ENCODE measurements at regions of chr1 and their contacts with region 1.

Region 1: DNA sequence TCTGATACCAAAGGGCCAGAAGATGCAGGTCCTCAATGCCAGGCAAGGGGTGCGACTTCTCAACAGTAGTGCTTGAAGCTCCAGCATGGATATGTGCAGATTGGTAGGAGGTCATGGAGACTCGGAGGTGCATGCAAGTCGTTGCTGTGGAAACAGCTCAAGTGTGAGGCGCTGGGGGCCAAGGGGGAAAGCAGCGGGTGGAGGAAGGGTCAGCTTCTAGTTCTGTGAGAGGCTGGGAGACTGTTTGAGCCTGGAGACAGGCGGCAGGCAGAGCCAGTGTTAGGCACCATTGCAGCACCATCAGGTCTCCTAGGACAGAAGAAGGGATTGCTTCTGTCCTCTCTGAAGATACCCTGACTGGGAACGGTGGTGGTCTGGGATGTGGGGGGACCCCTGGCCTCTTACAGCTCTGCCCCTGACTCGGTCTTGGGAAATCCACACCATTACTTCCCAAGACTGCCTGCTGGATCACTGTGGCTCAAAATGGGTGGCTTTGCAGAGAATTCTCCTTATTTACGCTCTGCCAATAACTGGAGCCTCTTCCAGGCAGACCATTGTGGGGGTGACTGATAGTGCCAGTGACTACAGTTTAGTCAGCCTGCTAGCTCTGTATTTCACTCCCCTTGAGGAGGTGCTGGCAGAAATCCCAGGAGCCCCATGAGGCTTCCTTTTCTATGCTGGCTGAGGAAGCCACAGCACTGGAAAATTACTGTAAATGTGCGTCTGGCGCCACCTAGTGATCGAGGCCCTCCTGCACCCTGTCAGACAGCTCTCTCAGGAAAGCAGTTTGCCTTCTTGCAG is 46.3 kb upstream of the VANGL1 start:
- DNase-seq: peak; percentile 74
- H3K4me3 ChIP-seq: peak overlapping the region in 1 of 2 experiments; percentile 12; a peak in 1 of 4 replicates
- H3K27ac ChIP-seq: no peak overlapping the region
- H3K4me1 ChIP-seq: peaks cover 4% of the 10 kb centered on the region in 2 experiments; a peak in 2 of 4 replicates
- H3K27me3 ChIP-seq: no peaks in the 10 kb centered on the region
- CTCF ChIP-seq: peak; percentile 98
- EP300 ChIP-seq: peak in 1 of 2 experiments; percentile 8; a peak in 1 of 4 replicates
- RAD21 ChIP-seq: peak; percentile 98

Region 2: DNA sequence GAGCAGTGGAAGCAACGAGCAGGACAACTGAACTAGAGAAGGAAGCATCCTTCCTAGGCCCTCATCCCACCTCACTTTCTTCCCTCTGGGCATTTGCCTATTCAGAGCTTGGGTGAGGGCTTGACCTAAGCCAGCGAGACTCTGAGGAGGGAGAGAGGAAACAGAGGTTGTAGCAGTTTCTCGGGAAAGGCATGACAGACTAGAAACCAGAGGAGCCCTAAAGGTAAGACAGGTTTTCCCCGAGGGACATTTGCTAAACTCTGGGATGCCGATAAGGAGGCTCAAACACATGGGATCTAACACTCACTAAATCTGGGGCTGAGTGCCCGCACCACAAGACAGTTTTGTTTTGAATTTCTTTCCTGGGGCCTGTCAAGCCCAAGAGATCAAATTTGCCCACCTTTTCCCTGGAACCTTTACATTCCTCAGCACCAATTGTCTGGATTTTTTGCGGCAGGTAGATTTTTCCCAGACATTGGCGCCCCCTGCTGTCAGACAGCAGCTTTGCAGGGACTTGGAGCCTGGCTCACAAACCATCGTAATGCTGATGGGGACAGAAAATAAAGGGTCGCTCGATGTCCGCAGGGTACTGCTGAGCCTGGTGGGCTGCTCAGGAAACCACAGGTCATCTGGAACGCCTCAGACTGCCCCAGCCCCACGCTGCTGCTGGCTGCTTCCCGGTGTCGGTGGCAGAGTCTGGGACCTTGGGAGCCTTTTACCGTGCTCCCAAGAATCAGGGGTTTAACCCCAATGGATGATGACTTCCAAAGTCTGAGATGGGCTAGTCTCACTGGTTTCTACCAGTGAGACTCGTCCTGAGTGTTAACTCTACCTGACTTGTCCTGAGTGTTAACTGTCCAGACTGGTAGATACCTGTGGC is 482.7 kb before region 1 on chr1:
- CTCF ChIA-PET with region 1: interaction called, 27 read pairs
- POLR2A ChIA-PET with region 1: no interaction called
- DNase-seq: peak; percentile 53
- H3K4me3 ChIP-seq: no peak overlapping the region; a peak in 1 of 4 replicates
- H3K27ac ChIP-seq: no peak overlapping the region; a peak in 1 of 4 replicates
- H3K4me1 ChIP-seq: peaks cover 7 to 9% of the 10 kb centered on the region in 2 experiments; a peak in 1 of 4 replicates
- H3K27me3 ChIP-seq: no peaks in the 10 kb centered on the region
- CTCF ChIP-seq: peak; percentile 97
- EP300 ChIP-seq: no peak
- RAD21 ChIP-seq: peak; percentile 89

Region 3: GRCh38 chr1:115133440-115133839 is 462.0 kb before region 1 on chr1:
- CTCF ChIA-PET with region 1: interaction called, 202 read pairs
- POLR2A ChIA-PET with region 1: no interaction called
- DNase-seq: no peak
- H3K4me3 ChIP-seq: no peak overlapping the region
- H3K27ac ChIP-seq: peak overlapping the region in 1 of 2 experiments; percentile 82; a peak in 2 of 4 replicates
- H3K4me1 ChIP-seq: peaks cover 6 to 25% of the 10 kb centered on the region in 2 experiments; a peak in 3 of 4 replicates
- H3K27me3 ChIP-seq: no peaks in the 10 kb centered on the region
- CTCF ChIP-seq: no peak
- EP300 ChIP-seq: no peak
- RAD21 ChIP-seq: no peak

Region 4: DNA sequence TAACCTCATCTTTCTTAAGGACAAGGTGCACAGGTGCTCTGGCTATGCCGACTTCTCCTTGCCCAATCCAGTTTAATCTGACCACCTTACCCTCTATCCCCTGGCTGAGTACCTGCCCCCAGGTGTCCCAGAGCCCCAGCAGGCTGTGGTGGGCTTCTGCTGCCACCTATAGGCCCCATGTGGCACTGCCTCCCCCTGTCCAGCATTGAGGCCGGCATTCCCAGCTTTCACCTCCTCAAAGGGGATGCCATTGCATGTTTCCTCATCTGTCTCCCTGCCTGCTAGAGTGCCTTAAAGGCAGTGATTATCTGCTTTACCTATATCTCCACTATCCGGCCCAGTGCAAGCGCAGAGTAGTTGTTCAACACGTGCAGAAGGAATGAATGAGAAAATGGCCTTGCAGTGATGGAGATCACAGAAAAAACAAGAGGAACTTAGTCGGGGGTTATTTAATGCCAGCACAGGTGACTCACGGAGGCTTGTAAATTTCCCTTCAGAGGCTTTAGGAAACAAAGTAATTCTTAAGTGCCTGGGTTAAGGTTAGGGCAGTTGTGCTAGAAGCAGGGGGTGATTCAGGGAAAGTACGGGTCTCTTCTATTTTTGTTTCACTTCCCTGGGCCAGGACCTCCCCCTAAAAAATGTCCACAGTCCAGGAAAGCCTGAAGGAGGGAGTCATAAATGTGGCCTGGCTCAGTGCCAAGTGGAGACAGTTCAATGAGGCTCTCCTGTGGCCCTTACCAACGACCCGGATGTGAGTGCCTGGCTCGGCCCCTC is 125.6 kb before region 1 on chr1:
- CTCF ChIA-PET with region 1: interaction called, 39 read pairs
- POLR2A ChIA-PET with region 1: no interaction called
- DNase-seq: peak; percentile 77
- H3K4me3 ChIP-seq: peak overlapping the region in 1 of 2 experiments; percentile 50; a peak in 1 of 4 replicates
- H3K27ac ChIP-seq: peak overlapping the region in 1 of 2 experiments; percentile 64; a peak in 3 of 4 replicates
- H3K4me1 ChIP-seq: peaks cover 8 to 9% of the 10 kb centered on the region in 2 experiments; a peak in 1 of 4 replicates
- H3K27me3 ChIP-seq: no peaks in the 10 kb centered on the region
- CTCF ChIP-seq: peak; percentile 97
- EP300 ChIP-seq: no peak
- RAD21 ChIP-seq: peak; percentile 95

Region 5: DNA sequence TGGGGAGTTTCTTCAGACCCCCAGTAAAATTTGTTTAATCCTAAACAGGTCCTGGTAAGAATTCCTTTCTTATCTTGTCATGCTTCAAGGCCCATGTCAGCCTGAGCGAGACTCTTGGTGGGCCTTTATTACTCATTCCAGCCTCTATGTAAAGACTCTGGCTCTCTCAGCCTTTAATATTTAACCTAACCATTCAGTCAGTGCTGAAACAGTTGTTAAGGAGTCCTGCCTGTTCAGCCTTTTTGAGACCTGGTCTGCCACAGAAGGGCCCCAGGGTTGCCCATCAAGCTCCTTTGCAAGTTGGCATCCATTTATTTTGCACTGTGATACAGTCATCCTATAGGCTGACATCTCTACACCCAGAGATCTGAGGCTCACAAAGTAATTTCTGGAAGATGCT is 61.4 kb before region 1 on chr1:
- CTCF ChIA-PET with region 1: interaction called, 11 read pairs
- POLR2A ChIA-PET with region 1: no interaction called
- DNase-seq: no peak
- H3K4me3 ChIP-seq: no peak overlapping the region
- H3K27ac ChIP-seq: no peak overlapping the region
- H3K4me1 ChIP-seq: peaks cover 2 to 7% of the 10 kb centered on the region in 2 experiments; a peak in 3 of 4 replicates
- H3K27me3 ChIP-seq: no peaks in the 10 kb centered on the region
- CTCF ChIP-seq: no peak
- EP300 ChIP-seq: no peak
- RAD21 ChIP-seq: no peak

Region 6: DNA sequence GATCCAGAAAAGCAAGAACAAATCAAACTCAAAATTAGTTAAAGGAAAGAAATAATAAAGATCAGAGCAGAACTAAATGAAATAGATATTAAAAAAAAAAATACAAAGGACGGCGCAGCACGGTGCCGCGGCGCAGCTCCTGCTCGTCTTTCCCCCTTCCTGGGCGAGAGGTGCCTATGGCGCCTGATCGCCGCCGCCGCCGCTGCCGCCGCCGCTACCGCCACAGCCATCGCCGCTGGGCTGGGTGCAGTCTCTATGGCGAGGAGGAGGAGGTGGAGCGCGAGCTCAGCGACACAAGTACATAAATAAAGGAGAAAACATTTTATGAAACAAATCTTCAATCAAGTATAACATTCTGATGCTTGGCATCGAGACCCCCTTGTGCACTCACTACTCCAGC is 31.3 kb before region 1 on chr1:
- CTCF ChIA-PET with region 1: interaction called, 14 read pairs
- POLR2A ChIA-PET with region 1: no interaction called
- DNase-seq: peak; percentile 55
- H3K4me3 ChIP-seq: peak overlapping the region; percentile 47 to 49; a peak in 3 of 4 replicates
- H3K27ac ChIP-seq: peak overlapping the region in 1 of 2 experiments; percentile 34; a peak in 1 of 4 replicates
- H3K4me1 ChIP-seq: peaks cover 0 to 5% of the 10 kb centered on the region in 2 experiments; a peak in 2 of 4 replicates
- H3K27me3 ChIP-seq: no peaks in the 10 kb centered on the region
- CTCF ChIP-seq: no peak
- EP300 ChIP-seq: no peak
- RAD21 ChIP-seq: no peak

Region 7: DNA sequence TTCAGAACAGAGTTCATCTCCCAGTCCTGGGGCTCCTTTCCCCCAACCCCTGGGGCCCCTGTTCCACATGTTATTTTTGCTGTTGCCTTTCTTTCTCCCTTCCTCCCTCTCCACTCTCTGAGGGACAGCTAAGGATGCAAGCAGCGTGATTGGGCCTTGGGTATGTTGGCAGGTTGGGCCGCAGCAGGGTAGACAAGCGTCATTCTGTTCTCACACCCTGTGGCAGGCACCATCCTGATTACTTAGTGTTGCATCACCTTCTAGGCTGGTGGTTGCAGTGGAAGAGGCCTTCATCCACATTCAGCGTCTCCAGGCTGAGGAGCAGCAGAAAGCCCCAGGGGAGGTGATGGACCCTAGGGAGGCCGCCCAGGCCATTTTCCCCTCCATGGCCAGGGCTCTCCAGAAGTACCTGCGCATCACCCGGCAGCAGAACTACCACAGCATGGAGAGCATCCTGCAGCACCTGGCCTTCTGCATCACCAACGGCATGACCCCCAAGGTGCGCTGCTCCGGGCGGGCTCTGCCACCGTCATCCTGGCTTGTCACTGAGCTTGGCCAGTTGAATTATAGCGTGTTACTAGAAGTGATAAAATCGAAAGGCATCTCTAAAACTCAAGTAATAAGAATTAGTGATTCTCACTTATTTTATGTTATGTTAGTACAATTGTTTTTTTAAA is 89.7 kb after region 1 on chr1:
- CTCF ChIA-PET with region 1: no interaction called
- POLR2A ChIA-PET with region 1: no interaction called
- DNase-seq: no peak
- H3K4me3 ChIP-seq: no peak overlapping the region
- H3K27ac ChIP-seq: no peak overlapping the region
- H3K4me1 ChIP-seq: no peaks in the 10 kb centered on the region
- H3K27me3 ChIP-seq: no peaks in the 10 kb centered on the region
- CTCF ChIP-seq: no peak
- EP300 ChIP-seq: no peak
- RAD21 ChIP-seq: no peak

Region 8: GRCh38 chr1:115764541-115764940 is 169.1 kb after region 1 on chr1:
- CTCF ChIA-PET with region 1: interaction called, 12 read pairs
- POLR2A ChIA-PET with region 1: no interaction called
- DNase-seq: peak; percentile 45
- H3K4me3 ChIP-seq: no peak overlapping the region
- H3K27ac ChIP-seq: no peak overlapping the region
- H3K4me1 ChIP-seq: no peaks in the 10 kb centered on the region
- H3K27me3 ChIP-seq: no peaks in the 10 kb centered on the region; the same call in 1 of the 2 replicates
- CTCF ChIP-seq: peak; percentile 52
- EP300 ChIP-seq: no peak
- RAD21 ChIP-seq: peak; percentile 67